GM12878 (cell line): ENCODE measurements at regions of chr14 and their contacts with region 1.

Region 1: GRCh38 chr14:77067632-77068514 is 30.2 kb upstream of the CIPC start:
- DNase-seq: no peak
- ATAC-seq: peak; percentile 85
- H3K4me3 ChIP-seq: no peak overlapping the region
- H3K27ac ChIP-seq: no peak overlapping the region
- H3K4me1 ChIP-seq: peaks cover 14% of the 10 kb centered on the region
- H3K27me3 ChIP-seq: peaks cover 0 to 10% of the 10 kb centered on the region in 2 experiments; a peak in 2 of 4 replicates
- CTCF ChIP-seq: peak; percentile 89 to 96 (median 96); a peak in 5 of 6 replicates
- EP300 ChIP-seq: no peak
- POLR2A ChIP-seq: no peak
- RAD21 ChIP-seq: peak; percentile 88

Region 2: GRCh38 chr14:76710056-76711010 is 357.5 kb before region 1 on chr14:
- CTCF ChIA-PET with region 1: interaction called, 40 read pairs
- POLR2A ChIA-PET with region 1: no interaction called
- RAD21 ChIA-PET with region 1: interaction called, 14 read pairs
- SMC1A ChIA-PET with region 1: interaction called, 30 read pairs
- in situ Hi-C with region 1: loop called (anchors 10 kb)
- intact Hi-C with region 1: loop called (anchors 2 kb)
- DNase-seq: no peak
- ATAC-seq: peak; percentile 64
- H3K4me3 ChIP-seq: no peak overlapping the region
- H3K27ac ChIP-seq: no peak overlapping the region
- H3K4me1 ChIP-seq: no peaks in the 10 kb centered on the region
- H3K27me3 ChIP-seq: no peaks in the 10 kb centered on the region; a peak in 2 of 4 replicates
- CTCF ChIP-seq: peak; percentile 65 to 73 (median 69)
- EP300 ChIP-seq: no peak
- POLR2A ChIP-seq: no peak
- RAD21 ChIP-seq: peak; percentile 74

Region 3: GRCh38 chr14:76904740-76905438 is 163.0 kb before region 1 on chr14:
- CTCF ChIA-PET with region 1: interaction called, 171 read pairs
- POLR2A ChIA-PET with region 1: no interaction called
- RAD21 ChIA-PET with region 1: interaction called, 166 read pairs
- SMC1A ChIA-PET with region 1: interaction called, 164 read pairs
- in situ Hi-C with region 1: loop called (anchors 10 kb)
- intact Hi-C with region 1: no loop called
- DNase-seq: peak; percentile 84
- ATAC-seq: peak; percentile 93
- H3K4me3 ChIP-seq: no peak overlapping the region
- H3K27ac ChIP-seq: peak overlapping the region; percentile 38
- H3K4me1 ChIP-seq: peaks cover 11% of the 10 kb centered on the region
- H3K27me3 ChIP-seq: no peaks in the 10 kb centered on the region
- CTCF ChIP-seq: no peak
- EP300 ChIP-seq: no peak
- POLR2A ChIP-seq: no peak
- RAD21 ChIP-seq: no peak

Region 4: GRCh38 chr14:76941946-76942805 is 125.7 kb before region 1 on chr14:
- CTCF ChIA-PET with region 1: interaction called, 6 read pairs
- POLR2A ChIA-PET with region 1: interaction called, 8 read pairs
- RAD21 ChIA-PET with region 1: interaction called, 10 read pairs
- SMC1A ChIA-PET with region 1: interaction called, 6 read pairs
- in situ Hi-C with region 1: no loop called
- intact Hi-C with region 1: no loop called
- DNase-seq: peak; percentile 72
- ATAC-seq: peak; percentile 29
- H3K4me3 ChIP-seq: no peak overlapping the region
- H3K27ac ChIP-seq: no peak overlapping the region
- H3K4me1 ChIP-seq: peaks cover 21% of the 10 kb centered on the region
- H3K27me3 ChIP-seq: no peaks in the 10 kb centered on the region
- CTCF ChIP-seq: no peak; a peak in 1 of 6 replicates
- EP300 ChIP-seq: no peak
- POLR2A ChIP-seq: no peak
- RAD21 ChIP-seq: no peak

Region 5: DNA sequence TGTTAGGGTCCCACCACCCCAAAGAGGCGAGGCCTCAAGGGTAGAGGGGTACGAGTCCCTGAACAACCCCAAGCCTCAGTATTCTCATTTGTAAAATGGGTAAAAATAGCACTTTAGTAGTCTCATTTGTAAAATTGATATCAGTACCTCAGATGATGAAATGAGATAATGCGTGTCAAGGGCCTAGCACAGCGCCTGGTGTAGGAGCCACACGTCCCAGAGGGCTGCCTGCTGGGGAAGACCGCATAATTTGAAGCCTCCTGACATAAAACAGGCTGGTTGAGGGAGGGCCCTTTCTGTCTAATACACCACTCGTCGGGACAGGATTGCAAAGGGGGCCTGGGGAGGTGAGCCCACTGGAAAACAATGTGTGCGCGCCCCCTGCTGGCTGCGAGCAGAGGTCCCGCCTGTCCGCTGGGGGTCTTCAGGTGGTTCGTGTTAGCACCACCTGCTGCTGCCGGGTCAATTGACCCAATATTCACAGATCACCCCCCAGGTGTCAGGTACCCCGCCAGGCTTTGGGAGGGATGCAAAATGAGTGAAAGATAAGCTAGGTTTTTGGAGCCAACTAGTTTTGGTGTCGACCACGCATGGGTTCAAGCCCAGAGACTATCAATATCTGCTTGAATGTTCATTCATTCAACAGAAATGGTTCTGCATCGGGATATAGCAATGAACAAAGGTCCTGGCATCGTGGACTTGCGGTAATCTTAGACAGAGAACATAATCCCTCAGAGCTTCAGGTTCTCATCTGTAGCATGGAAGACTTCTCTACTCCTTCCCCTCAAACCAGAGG is 14.6 kb before region 1 on chr14:
- CTCF ChIA-PET with region 1: interaction called, 124 read pairs
- POLR2A ChIA-PET with region 1: interaction called, 4 read pairs
- RAD21 ChIA-PET with region 1: interaction called, 43 read pairs
- SMC1A ChIA-PET with region 1: interaction called, 44 read pairs
- in situ Hi-C with region 1: no loop called
- intact Hi-C with region 1: no loop called
- DNase-seq: no peak
- ATAC-seq: peak; percentile 98
- H3K4me3 ChIP-seq: no peak overlapping the region
- H3K27ac ChIP-seq: no peak overlapping the region
- H3K4me1 ChIP-seq: peaks cover 12% of the 10 kb centered on the region
- H3K27me3 ChIP-seq: no peaks in the 10 kb centered on the region
- CTCF ChIP-seq: peak; percentile 77 to 90 (median 85)
- EP300 ChIP-seq: no peak
- POLR2A ChIP-seq: no peak
- RAD21 ChIP-seq: peak; percentile 91

Region 6: GRCh38 chr14:77097700-77098528 is 30.0 kb after region 1 on chr14 and contains the start of gene CIPC:
- CTCF ChIA-PET with region 1: interaction called, 719 read pairs
- POLR2A ChIA-PET with region 1: interaction called, 4 read pairs
- RAD21 ChIA-PET with region 1: interaction called, 199 read pairs
- SMC1A ChIA-PET with region 1: interaction called, 136 read pairs
- in situ Hi-C with region 1: no loop called
- intact Hi-C with region 1: loop called (anchors 1 kb)
- DNase-seq: peak; percentile 97
- ATAC-seq: peak; percentile 90
- H3K4me3 ChIP-seq: peak within 1 kb of the TSS; percentile 83
- H3K27ac ChIP-seq: peak within 1 kb of the TSS; percentile 87
- H3K4me1 ChIP-seq: peaks cover 17% of the 10 kb centered on the region
- H3K27me3 ChIP-seq: no peaks in the 10 kb centered on the region
- CTCF ChIP-seq: peak in 1 of 3 experiments; percentile 7; a peak in 1 of 6 replicates
- EP300 ChIP-seq: peak in 1 of 2 experiments; percentile 78; a peak in 2 of 4 replicates
- POLR2A ChIP-seq: peak; percentile 86
- RAD21 ChIP-seq: no peak
- polyA plus RNA-seq, gene CIPC: 5.6 to 6.6 TPM